PC-3 (cell line): ENCODE measurements at regions of chr6 and their contacts with region 1.

Region 1: GRCh38 chr6:51350308-51350904 is 531.7 kb downstream of the TFAP2B start:
- DNase-seq: peak; percentile 45
- ATAC-seq: no peak
- H3K4me3 ChIP-seq: no peak overlapping the region
- H3K27ac ChIP-seq: no peak overlapping the region
- H3K4me1 ChIP-seq: no peaks in the 10 kb centered on the region
- H3K27me3 ChIP-seq: no peaks in the 10 kb centered on the region
- CTCF ChIP-seq: peak; percentile 74

Region 2: DNA sequence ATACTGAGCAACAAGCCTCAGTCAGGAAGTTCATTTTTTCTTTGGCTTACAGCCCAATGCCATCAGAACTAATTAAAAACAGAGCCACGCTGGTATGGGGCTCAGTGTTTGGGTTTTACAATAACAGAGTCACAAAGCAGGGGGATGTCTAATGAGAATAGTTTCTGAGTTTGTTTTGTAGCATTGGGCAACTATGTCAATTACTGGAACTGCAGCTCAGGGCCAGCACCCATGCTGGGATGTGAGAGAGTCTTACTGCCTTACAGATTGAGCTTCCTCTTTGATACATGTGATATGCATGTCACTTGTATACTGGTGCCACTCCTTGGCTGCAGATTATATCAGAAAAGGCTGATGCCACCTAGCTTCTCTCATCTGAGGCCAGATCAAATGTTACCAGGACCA is 414.1 kb before region 1 on chr6:
- CTCF ChIA-PET with region 1: no interaction called
- POLR2A ChIA-PET with region 1: no interaction called
- intact Hi-C with region 1: loop called (anchors 2 kb)
- DNase-seq: no peak
- ATAC-seq: no peak; the same call in 1 of the 2 replicates
- H3K4me3 ChIP-seq: no peak overlapping the region
- H3K27ac ChIP-seq: no peak overlapping the region
- H3K4me1 ChIP-seq: no peaks in the 10 kb centered on the region
- H3K27me3 ChIP-seq: no peaks in the 10 kb centered on the region
- CTCF ChIP-seq: no peak